Tibial artery (tissue), 4 donors: ENCODE measurements at regions of chr1 and their contacts with region 1.

Region 1: GRCh38 chr1:180482425-180483275 is 19.7 kb downstream of the ACBD6 start:
- DNase-seq: no peak
- H3K4me3 ChIP-seq: no peak overlapping the region
- H3K27ac ChIP-seq: no peak overlapping the region
- H3K4me1 ChIP-seq: peaks cover 0 to 5% (median 2%) of the 10 kb centered on the region in 4 donors
- H3K27me3 ChIP-seq: no peaks in the 10 kb centered on the region
- CTCF ChIP-seq: peak; percentile 60 to 65

Region 2: GRCh38 chr1:180188091-180188506 is 294.6 kb before region 1 on chr1:
- intact Hi-C with region 1: loop called (anchors 10 kb)
- DNase-seq: no peak
- H3K4me3 ChIP-seq: no peak overlapping the region
- H3K27ac ChIP-seq: no peak overlapping the region
- H3K4me1 ChIP-seq: no peaks in the 10 kb centered on the region
- H3K27me3 ChIP-seq: no peaks in the 10 kb centered on the region
- CTCF ChIP-seq: peak; percentile 41 to 44

Region 3: DNA sequence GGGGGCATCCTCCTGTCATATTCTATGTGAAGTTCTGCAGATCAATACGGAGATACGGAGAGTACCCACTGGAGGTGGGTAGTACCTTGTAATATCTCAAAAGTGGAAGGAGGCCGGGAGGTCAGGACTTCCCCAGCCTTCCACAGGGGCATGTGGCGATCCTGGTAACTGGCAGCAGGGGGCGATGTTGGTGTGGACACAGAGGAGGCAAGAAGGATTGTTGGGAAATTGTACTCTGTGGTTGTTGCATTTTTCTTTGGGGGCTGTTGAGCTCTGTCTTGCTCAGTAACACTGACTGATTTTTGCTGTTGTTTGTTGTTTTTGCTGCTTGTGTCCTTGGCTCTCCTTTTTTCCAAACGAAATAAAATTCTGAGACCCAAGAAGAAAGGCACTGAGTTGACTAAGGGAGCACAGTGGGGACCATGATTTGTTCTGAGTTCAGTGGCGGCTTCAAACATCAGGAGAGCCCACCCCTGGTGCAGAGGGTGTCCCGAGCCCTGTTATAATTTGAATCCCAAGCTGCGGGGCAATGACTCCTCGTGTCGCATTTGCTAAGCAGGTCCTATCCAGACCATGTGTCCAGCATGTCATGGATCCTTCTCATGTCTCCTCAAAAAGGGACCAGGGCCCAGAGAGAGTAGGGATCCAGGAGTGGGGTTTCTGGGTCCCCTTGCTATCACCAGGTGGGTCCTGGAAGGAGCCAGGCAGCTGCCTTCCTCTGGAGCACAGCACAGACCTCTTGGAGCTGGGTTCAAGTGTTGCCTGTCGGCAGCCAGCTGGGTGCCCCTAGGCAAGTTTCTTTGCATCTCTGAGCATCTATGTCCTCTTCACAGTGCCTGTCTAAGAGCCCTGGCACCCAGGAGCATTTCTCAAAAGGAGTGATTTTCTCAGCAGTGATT is 229.8 kb before region 1 on chr1:
- intact Hi-C with region 1: loop called (anchors 5 kb)
- DNase-seq: peak; percentile 78
- H3K4me3 ChIP-seq: no peak overlapping the region
- H3K27ac ChIP-seq: no peak overlapping the region
- H3K4me1 ChIP-seq: no peaks in the 10 kb centered on the region
- H3K27me3 ChIP-seq: peaks cover 0 to 66% of the 10 kb centered on the region in 2 donors
- CTCF ChIP-seq: peak; percentile 65 to 71

Region 4: GRCh38 chr1:180353945-180354344 is 128.7 kb before region 1 on chr1:
- intact Hi-C with region 1: no loop called
- DNase-seq: no peak
- H3K4me3 ChIP-seq: no peak overlapping the region
- H3K27ac ChIP-seq: no peak overlapping the region
- H3K4me1 ChIP-seq: peaks cover 0 to 3% (median 0%) of the 10 kb centered on the region in 4 donors
- H3K27me3 ChIP-seq: no peaks in the 10 kb centered on the region
- CTCF ChIP-seq: no peak

Region 5: DNA sequence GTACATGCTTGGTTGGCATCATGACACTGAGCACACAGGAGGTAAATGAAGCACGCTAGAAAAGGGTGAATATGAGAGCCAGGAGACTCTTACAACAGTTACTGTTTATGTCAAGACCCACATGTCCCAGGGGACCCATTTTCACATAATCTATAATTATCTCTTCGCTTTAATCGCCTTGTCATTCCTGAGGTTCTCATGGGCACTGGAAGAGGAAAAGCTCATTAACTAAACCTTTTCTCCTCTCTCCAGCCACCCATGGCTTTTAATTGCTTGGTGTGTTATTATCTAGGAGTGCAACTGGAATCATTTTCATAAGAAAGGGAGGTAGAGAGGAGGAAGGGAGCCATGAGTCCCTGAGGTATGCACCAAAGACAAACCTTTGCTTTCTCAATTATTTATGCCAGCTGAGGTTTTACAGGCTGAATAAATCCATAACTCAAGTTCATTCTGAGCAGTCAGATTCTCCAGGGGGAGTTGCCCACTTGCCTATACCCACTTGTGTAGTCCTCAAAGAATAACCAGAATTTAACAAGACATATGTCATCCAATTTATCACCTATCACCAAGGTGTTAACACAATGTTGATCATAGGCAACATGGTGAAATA is 57.7 kb before region 1 on chr1:
- intact Hi-C with region 1: no loop called
- DNase-seq: no peak
- H3K4me3 ChIP-seq: no peak overlapping the region
- H3K27ac ChIP-seq: no peak overlapping the region
- H3K4me1 ChIP-seq: no peaks in the 10 kb centered on the region
- H3K27me3 ChIP-seq: no peaks in the 10 kb centered on the region
- CTCF ChIP-seq: no peak